AG04449 (cell line): ENCODE measurements at regions of chr1 and their contacts with region 1.

Region 1: GRCh38 chr1:74689621-74690363 is 16.2 kb upstream of the ERICH3 start:
- DNase-seq: no peak
- H3K4me3 ChIP-seq: no peak overlapping the region
- CTCF ChIP-seq: peak; percentile 71

Region 2: DNA sequence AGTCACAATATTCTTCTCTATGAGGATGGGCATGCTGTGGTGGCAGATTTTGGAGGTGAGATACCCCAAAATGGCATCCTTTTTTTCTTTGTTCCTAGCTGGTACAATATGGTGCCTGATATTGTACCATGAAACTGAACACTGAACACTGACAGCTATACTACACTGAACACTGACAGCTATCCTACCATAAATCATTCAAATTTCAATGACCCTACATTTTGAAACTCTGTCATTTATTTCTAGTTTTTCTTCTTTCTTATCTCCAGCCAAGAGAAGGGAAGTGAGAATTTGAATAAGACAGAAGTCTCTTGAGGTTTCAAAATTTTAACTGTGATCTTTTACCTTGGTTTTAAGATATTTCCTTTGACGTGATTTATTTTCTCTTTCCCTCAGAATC is 253.7 kb before region 1 on chr1:
- CTCF ChIA-PET with region 1: no interaction called
- POLR2A ChIA-PET with region 1: no interaction called
- DNase-seq: no peak
- H3K4me3 ChIP-seq: no peak overlapping the region
- CTCF ChIP-seq: no peak

Region 3: DNA sequence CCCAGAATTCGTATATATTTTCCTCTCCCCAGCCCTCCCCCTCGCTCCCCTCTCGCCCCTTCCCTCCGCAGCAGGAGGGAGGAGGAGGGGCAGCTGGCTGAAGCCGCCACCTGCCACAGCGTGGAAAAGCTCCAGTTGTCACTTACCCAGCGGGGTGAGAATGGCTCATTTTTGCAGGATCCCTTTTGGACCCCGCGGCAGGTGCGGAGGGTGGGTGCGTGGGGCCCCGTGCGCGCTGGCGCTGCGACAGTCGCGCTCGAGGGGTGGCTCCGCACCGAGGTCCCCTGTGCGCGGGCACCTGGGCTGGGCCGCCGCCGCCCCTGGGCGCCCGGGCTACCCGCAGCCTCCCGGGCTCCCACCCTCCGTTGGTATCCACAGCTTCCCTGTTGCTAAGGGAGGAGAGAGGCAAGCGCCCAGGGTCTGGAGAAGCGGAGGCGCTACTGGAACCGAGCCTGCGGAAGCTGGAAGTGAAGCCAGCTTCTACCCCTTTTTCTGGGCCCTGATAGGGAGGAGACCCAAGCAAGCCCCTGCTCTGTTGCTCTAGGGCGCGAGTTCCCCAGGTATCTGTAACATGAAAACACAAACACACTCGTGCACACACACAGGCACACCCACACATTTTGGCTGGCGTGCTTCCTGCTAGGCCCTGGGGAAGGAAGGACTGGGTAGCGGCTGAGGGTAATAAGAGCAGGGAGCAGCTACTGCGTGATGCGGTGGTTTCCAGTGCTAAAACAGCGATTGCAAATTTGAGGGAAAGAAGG is 16.3 kb before region 1 on chr1 and contains the start of gene ERICH3:
- CTCF ChIA-PET with region 1: interaction called, 12 read pairs
- POLR2A ChIA-PET with region 1: no interaction called
- DNase-seq: no peak
- H3K4me3 ChIP-seq: 0 out of 2 replicates have a peak within 1 kb of the TSS, but pooled peaks have one; percentile 9
- CTCF ChIP-seq: no peak

Region 4: DNA sequence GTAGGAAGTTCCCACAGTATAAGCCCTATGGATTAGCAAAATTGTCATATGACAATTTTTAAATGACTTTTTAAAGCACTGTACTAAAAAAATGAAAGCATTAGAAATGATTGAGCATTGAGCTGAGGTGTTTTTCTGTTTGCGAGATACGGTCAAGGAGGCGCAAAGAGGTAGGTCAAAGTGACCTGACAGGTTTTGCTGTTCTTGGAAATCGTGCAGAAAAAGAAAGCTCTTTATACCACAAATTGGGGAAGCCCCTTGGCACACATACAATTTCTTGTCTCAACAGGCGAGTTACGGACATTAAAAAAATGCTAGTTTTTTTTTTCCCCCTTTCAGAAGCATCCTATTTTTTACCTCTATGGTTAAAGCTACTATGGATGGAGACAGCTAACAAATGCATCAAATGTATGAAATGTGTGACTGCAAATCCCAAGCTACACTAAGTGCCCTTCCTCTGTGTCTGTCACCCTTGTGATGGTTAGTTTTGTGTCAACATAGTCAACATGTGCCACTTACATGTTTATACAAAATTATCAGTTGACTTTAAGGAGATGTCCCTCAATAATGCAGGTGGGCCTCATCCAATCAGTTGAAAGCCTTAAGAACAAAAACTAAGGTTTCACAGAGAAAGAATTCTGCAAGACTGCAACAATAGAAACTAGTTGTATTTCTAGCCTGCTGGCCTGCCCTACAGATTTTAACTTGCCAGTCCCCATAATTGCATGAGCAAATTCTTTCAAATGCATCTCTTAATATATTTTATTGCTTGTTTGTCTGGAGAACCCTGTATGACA is 13.8 kb after region 1 on chr1:
- CTCF ChIA-PET with region 1: interaction called, 26 read pairs
- POLR2A ChIA-PET with region 1: no interaction called
- DNase-seq: no peak
- H3K4me3 ChIP-seq: no peak overlapping the region
- CTCF ChIP-seq: no peak

Region 5: DNA sequence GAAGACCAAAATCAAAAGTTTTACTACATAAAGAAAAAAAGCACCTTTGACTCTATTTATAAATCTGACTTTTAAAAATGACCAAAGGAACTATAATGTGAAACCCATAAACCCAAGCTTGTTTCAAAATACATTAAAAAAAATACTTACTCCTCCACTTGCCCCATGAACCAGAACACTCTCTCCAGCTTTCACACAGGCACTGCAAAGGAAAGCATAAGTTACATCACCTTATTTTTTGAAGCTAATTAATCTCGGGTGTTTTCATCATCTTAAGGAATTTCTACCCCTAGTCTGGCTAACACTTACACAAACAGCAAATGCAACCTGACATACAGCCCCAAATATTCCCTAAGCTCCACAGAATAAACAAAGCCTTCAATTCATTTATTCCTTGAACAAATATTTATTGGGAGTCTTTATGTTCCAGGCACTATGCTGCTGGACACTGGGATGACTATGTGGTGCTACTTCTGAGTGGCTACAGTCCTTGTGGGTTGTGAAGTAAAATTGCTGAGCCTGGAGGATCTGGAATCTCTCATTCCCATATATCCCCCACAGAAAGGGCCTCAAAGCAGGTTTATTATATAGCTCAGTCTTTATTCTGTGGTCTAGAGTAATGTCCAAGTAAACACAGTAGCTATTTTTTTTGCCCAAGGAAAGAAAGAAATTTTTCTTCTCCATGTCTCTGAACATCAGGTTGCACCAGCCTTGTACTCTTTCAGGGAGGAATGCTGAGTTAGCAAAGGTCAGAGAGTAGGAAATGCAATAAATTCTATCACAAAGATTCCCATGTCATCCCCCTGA is 24.8 kb after region 1 on chr1:
- CTCF ChIA-PET with region 1: interaction called, 16 read pairs
- POLR2A ChIA-PET with region 1: no interaction called
- DNase-seq: no peak
- H3K4me3 ChIP-seq: no peak overlapping the region
- CTCF ChIP-seq: no peak

Region 6: GRCh38 chr1:74733604-74734484 is 44.1 kb after region 1 on chr1:
- CTCF ChIA-PET with region 1: interaction called, 13 read pairs
- POLR2A ChIA-PET with region 1: no interaction called
- DNase-seq: no peak
- H3K4me3 ChIP-seq: peak overlapping the region; percentile 100
- CTCF ChIP-seq: peak; percentile 74

Region 7: GRCh38 chr1:74780594-74780993 is 90.8 kb after region 1 on chr1:
- CTCF ChIA-PET with region 1: no interaction called
- POLR2A ChIA-PET with region 1: no interaction called
- DNase-seq: no peak
- H3K4me3 ChIP-seq: no peak overlapping the region
- CTCF ChIP-seq: no peak